A673 (cell line): ENCODE measurements at regions of chr5 and their contacts with region 1.

Region 1: DNA sequence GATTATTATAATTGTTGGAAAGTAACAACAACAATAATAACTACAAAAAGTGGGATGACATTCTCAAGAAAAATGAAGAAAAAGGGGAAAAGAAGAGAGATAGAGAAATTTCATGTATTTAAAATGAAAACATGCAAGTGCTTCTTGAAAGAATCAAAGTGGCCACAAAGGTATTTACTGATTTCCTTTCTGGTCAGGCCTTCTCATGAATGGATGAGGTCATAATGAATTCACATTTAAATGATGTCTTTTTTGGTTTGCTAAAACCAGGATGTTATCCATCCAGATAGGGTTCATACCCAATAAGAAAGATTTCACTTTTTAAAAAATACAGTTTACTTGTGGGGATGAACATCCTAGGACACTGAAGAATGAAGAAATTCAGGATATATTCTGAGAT is 446.4 kb upstream of the PTGER4 start:
- DNase-seq: no peak
- H3K4me3 ChIP-seq: no peak overlapping the region
- H3K27ac ChIP-seq: no peak overlapping the region
- H3K4me1 ChIP-seq: no peaks in the 10 kb centered on the region
- H3K27me3 ChIP-seq: no peaks in the 10 kb centered on the region
- CTCF ChIP-seq: no peak

Region 2: DNA sequence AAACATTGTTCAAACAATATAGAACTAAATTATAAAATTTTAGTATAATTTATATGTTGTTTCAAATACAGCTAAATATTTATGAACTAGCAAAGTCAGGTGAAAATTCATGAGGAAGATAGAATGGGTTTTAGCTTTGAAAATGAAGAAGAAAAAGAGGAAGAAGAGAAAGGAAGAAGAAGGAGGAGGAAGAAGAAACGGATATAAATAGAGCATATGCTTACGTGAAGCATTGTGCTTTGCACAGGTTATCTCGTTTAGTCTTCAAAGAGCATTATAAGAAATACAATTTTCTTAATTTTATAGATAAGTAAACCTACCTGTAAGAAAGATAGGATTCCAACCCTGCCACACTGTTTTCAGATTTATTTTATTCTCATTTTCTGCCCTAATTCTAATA is 187.8 kb before region 1 on chr5:
- CTCF ChIA-PET with region 1: no interaction called
- POLR2A ChIA-PET with region 1: interaction called, 14 read pairs
- intact Hi-C with region 1: no loop called
- DNase-seq: no peak
- H3K4me3 ChIP-seq: no peak overlapping the region
- H3K27ac ChIP-seq: no peak overlapping the region
- H3K4me1 ChIP-seq: no peaks in the 10 kb centered on the region
- H3K27me3 ChIP-seq: no peaks in the 10 kb centered on the region
- CTCF ChIP-seq: no peak

Region 3: GRCh38 chr5:40619421-40619820 is 386.2 kb after region 1 on chr5:
- CTCF ChIA-PET with region 1: no interaction called
- POLR2A ChIA-PET with region 1: no interaction called
- intact Hi-C with region 1: no loop called
- DNase-seq: no peak
- H3K4me3 ChIP-seq: no peak overlapping the region
- H3K27ac ChIP-seq: no peak overlapping the region
- H3K4me1 ChIP-seq: no peaks in the 10 kb centered on the region
- H3K27me3 ChIP-seq: no peaks in the 10 kb centered on the region
- CTCF ChIP-seq: no peak